ENCODE measurements at regions of chr1 and their contacts with region 1.

Region 1: DNA sequence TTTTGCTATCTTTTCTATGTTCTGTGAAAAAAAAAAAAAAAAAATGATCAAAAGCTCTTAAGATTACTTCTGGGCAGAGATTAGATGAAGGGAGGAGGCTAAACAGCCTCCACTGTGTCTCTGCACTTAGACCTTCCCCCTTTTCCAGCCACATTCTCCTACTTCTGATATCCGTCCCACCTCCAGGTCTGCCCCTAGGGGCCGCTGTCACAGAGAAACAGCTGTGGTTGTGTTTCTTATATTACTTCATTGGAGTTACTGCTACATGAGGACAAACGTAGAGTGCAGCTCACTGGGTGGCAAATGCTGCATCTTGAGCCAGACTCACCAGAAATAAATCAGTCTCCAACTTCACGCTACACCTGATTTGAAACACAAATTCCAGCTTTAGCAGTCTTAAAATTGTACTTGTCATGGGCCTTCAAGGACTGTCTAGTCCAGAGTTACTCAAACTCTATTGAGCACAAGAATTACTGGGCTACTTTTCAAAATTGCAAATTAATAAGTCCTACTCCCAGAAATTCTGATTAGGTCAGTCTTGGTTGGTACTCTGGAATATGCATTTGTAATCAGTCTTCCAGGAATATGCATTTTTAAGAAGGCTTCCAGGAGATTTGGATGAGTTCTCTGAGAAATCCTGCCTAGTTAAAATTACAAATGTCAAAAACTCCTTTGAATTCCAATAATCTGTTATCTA is 125.2 kb upstream of the PTBP2 start:
- DNase-seq: no peak

Region 2: GRCh38 chr1:96710708-96711477 is 114.5 kb after region 1 on chr1:
- intact Hi-C with region 1: loop called (anchors 10 kb)
- DNase-seq: no peak

Measured in posterior cingulate gyrus (tissue), 11 donors.